Activated CD4-positive, alpha-beta memory T cell treated with anti-CD3 and anti-CD28 coated beads, Interleukin-2, amount 10 ng/mL, durations not matched to agents 7 days and 5 days (primary cell): ENCODE measurements at regions of chr14 and their contacts with region 1.

Region 1: DNA sequence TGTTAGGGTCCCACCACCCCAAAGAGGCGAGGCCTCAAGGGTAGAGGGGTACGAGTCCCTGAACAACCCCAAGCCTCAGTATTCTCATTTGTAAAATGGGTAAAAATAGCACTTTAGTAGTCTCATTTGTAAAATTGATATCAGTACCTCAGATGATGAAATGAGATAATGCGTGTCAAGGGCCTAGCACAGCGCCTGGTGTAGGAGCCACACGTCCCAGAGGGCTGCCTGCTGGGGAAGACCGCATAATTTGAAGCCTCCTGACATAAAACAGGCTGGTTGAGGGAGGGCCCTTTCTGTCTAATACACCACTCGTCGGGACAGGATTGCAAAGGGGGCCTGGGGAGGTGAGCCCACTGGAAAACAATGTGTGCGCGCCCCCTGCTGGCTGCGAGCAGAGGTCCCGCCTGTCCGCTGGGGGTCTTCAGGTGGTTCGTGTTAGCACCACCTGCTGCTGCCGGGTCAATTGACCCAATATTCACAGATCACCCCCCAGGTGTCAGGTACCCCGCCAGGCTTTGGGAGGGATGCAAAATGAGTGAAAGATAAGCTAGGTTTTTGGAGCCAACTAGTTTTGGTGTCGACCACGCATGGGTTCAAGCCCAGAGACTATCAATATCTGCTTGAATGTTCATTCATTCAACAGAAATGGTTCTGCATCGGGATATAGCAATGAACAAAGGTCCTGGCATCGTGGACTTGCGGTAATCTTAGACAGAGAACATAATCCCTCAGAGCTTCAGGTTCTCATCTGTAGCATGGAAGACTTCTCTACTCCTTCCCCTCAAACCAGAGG is 24.7 kb upstream of the IRF2BPL start:
- DNase-seq: peak; percentile 71
- H3K4me3 Mint-ChIP-seq: no peak overlapping the region
- H3K27ac Mint-ChIP-seq: no peak overlapping the region
- H3K4me1 Mint-ChIP-seq: peaks cover 24% of the 10 kb centered on the region
- H3K27me3 Mint-ChIP-seq: peaks cover 2% of the 10 kb centered on the region

Region 2: DNA sequence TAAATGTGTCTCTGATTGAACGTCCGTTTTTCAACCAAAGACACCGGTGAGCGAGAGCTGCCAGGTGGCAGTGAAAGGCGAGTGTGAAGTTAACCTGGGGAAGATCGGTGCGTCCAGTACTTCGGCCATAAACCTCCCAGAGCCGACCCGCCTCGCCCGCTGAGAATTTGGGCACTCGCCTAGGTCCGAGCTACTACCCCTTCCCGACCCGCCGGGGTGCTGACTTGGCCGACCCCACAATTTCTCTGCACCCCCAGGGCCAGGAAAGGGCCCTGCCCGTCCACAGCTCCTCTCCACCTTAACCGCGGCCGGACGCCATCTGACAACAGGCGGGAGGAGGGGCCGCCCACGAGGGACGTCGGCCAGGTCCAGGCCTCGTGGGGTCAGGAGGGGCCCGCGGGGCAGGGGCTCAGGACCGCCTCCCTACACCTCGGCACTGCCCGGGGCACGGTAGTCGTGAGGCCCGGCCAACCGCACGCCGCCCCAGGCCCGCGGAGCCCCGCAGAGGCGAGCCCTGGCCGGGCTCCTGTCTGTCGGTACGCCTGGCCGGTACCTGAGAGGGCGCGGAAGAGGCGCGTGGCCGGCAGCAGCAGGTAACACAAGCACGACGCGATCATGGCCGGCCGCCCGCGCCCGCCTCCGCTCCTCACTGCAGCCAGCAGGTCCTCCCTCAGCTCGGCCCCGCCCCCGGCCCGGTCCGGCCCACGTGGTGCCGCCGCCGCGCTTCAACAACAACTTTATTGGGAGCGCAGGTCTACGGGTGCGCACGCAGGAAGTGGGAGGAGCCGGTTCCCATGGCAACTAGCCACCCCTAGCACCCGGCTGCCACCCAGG is 240.8 kb before region 1 on chr14 and contains the start of gene ANGEL1:
- CTCF ChIA-PET with region 1: no interaction called
- POLR2A ChIA-PET with region 1: no interaction called
- DNase-seq: peak; percentile 98
- H3K4me3 Mint-ChIP-seq: peak within 1 kb of the TSS; percentile 90
- H3K27ac Mint-ChIP-seq: peak within 1 kb of the TSS; percentile 73
- H3K4me1 Mint-ChIP-seq: peaks cover 25% of the 10 kb centered on the region
- H3K27me3 Mint-ChIP-seq: no peaks in the 10 kb centered on the region
- total RNA-seq, gene ANGEL1: 9.9 to 11.0 TPM

Region 3: GRCh38 chr14:77028384-77029231 is 24.6 kb before region 1 on chr14 and contains the start of gene IRF2BPL:
- CTCF ChIA-PET with region 1: interaction called, 23 read pairs
- POLR2A ChIA-PET with region 1: interaction called, 18 read pairs
- DNase-seq: peak; percentile 95
- H3K4me3 Mint-ChIP-seq: peak within 1 kb of the TSS; percentile 88
- H3K27ac Mint-ChIP-seq: peak within 1 kb of the TSS; percentile 89
- H3K4me1 Mint-ChIP-seq: peaks cover 58% of the 10 kb centered on the region
- H3K27me3 Mint-ChIP-seq: no peaks in the 10 kb centered on the region
- total RNA-seq, gene IRF2BPL: 39.0 to 39.3 TPM

Region 4: GRCh38 chr14:77033622-77034521 is 19.4 kb before region 1 on chr14:
- CTCF ChIA-PET with region 1: interaction called, 23 read pairs
- POLR2A ChIA-PET with region 1: interaction called, 18 read pairs
- DNase-seq: peak; percentile 83
- H3K4me3 Mint-ChIP-seq: peak overlapping the region; percentile 85
- H3K27ac Mint-ChIP-seq: peak overlapping the region; percentile 94
- H3K4me1 Mint-ChIP-seq: peaks cover 79% of the 10 kb centered on the region
- H3K27me3 Mint-ChIP-seq: no peaks in the 10 kb centered on the region